ENCODE measurements at regions of chr15 and their contacts with region 1.

Region 1: DNA sequence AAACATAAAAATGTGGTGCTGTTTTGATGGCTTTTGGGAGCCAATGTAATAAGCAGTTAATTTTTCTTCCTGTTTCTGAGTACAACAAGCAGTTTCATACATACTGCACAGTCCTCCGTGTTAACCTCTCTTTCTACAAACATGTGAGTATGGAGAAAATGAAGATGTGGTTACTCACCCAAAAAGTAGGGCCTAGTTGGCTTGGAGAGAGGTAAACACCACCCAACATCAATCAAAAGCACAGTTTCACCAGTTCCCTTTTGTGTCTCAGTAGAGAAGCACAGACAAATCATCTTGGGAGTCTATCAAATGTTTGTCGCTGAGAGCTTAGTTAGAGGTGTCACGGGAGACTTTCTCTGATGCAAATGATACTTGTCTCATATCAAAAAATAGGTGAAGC is 320.2 kb downstream of the UNC13C start:
- DNase-seq: no peak
- H3K4me3 ChIP-seq: no peak overlapping the region
- H3K27ac ChIP-seq: no peak overlapping the region
- H3K4me1 ChIP-seq: no peaks in the 10 kb centered on the region
- H3K27me3 ChIP-seq: no peaks in the 10 kb centered on the region
- CTCF ChIP-seq: no peak

Region 2: DNA sequence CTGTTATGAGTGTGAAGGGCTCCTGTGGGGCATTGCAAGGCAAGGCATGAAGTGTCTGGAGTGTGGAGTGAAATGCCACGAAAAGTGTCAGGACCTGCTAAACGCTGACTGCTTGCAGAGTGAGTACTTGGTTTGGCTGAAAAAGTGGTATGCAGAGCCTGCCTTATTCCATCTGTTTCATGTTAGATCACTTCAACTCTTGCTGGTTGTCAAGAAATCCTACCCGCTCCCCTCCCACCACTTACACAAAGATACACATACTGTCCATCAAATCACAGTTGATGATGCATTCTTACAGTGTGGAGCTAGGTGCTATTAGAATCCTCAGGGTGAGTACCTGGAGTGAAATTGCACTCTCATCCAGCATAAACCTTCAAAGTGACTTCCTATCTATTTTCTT is 48.1 kb before region 1 on chr15:
- intact Hi-C with region 1: loop called (anchors 5 kb)
- DNase-seq: no peak
- H3K4me3 ChIP-seq: no peak overlapping the region
- H3K27ac ChIP-seq: no peak overlapping the region
- H3K4me1 ChIP-seq: no peaks in the 10 kb centered on the region
- H3K27me3 ChIP-seq: no peaks in the 10 kb centered on the region
- CTCF ChIP-seq: no peak